WTC11 (cell line): ENCODE measurements at regions of chr3 and their contacts with region 1.

Region 1: DNA sequence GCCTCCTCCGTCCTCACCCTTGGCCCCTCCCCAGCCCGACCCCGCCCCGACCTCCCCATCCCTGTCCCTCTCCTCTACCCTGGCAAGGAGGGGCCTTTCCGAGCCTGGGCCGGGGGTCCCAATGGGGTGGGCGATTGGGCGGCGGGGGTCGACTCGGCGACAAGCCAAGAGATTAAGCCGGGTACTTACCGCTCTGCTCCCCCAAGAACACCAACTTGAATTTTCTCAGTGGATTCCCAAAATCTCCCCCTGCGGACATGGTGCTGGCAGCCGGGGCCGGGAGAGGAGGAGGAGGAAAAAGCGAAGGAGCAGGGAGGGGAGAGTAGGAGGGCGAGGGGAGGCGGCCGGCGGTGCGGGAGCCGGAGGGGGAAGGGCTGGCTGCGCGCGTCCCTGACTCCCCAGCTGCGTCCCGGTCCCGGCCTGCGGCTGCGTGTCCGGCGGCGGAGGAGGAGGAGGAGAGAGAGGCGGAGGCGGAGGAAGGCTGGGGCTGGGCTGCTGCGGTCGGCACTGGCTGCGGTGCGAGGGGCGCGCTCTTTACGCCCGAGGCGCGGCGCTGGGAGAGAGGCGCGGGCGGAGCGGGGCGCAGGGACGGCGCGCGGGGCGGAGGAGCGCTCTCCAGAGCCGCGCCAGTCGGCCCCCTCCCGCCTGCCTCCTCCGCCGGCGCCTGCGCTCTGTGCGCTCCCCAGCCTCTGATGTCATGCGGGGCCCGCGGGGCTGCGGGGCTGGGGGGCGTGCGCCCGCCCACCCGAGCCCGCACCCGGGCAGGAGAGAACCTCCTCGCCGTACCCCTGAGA is at the start of gene RAB6B:
- DNase-seq: peak; percentile 70
- ATAC-seq: peak; percentile 77
- H3K4me3 Mint-ChIP-seq: peak within 1 kb of the TSS; percentile 89
- H3K27ac Mint-ChIP-seq: no peak within 1 kb of the TSS
- H3K4me1 Mint-ChIP-seq: peaks cover 11% of the 10 kb centered on the region
- H3K27me3 Mint-ChIP-seq: peaks cover 49% of the 10 kb centered on the region
- CTCF ChIP-seq: no peak
- total RNA-seq, gene RAB6B: 14.9 to 21.0 TPM (median 18.0 TPM) in 3 replicates

Region 2: DNA sequence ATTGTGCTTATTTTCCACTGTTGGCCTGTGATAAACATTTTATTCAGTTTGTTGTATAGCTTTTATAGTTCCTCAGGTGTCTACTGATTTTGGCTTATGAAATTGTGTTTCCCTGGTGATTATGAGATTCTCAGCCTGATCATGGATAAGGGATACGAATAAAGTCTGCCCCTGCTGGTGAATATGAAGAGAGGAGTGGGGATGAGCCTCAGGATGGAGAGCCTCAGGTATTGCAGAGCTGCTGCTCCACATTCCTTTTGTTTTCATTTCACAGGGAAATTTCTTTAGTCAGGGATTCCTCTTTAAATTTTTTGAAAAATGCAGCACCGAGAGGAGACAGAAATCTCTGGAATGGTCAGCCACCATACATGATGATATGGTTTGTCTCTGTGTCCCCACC is 15.0 kb after region 1 on chr3:
- CTCF ChIA-PET with region 1: interaction called, 14 read pairs
- POLR2A ChIA-PET with region 1: interaction called, 4 read pairs
- DNase-seq: no peak
- ATAC-seq: peak; percentile 81
- H3K4me3 Mint-ChIP-seq: no peak overlapping the region
- H3K27ac Mint-ChIP-seq: no peak overlapping the region
- H3K4me1 Mint-ChIP-seq: no peaks in the 10 kb centered on the region
- H3K27me3 Mint-ChIP-seq: no peaks in the 10 kb centered on the region
- CTCF ChIP-seq: no peak

Region 3: DNA sequence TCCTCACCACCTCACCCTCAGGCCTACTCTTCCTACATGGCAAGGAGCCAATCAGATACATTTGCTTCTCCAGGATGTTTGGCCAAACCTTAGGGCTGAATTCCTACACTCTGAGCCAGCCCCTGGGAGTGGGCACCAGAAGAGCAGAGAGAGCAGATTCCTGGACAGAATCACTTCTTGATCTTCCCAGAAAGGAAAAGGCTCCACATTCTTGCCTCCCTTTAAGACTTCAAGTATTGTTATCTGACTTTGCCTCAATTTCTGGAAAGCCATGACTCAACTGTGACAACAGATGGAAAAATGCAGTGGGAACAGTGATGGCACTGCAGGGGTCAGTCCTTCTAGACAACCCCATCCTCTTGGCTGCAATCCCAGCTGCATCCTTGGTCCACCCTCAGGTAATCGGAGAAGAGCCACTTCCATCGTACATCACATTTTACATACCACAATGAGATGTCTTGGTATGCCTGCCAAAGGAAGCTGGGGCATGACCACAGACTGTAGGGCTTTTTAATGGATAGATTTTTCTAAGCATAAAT is 113.3 kb after region 1 on chr3:
- CTCF ChIA-PET with region 1: no interaction called
- POLR2A ChIA-PET with region 1: no interaction called
- DNase-seq: no peak
- ATAC-seq: no peak
- H3K4me3 Mint-ChIP-seq: no peak overlapping the region
- H3K27ac Mint-ChIP-seq: no peak overlapping the region
- H3K4me1 Mint-ChIP-seq: no peaks in the 10 kb centered on the region
- H3K27me3 Mint-ChIP-seq: peaks cover 4% of the 10 kb centered on the region
- CTCF ChIP-seq: no peak